Panc1 (cell line): ENCODE measurements at regions of chr1 and their contacts with region 1.

Region 1: DNA sequence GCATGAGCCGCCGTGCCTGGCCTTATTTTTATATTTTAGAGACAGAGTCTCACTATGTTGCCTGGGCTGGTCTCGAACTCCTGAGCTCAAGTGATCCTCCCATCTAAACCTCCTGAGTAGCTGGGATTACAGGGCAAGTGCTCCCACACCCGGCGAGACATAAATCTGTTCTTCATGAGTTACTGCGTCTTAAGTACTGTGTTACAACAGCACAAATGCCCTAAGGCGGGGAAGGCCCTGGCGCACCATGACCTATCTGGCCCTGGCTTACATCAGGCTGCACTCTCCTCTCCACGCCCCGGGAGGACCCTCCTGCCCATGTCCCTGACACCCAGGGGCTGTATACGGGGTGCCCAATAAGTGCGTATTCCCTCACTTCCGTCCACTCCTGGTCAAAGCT is 4.2 kb downstream of the GPR153 start:
- DNase-seq: no peak
- ATAC-seq: no peak
- H3K4me3 ChIP-seq: no peak overlapping the region
- H3K27ac ChIP-seq: no peak overlapping the region
- H3K4me1 ChIP-seq: no peaks in the 10 kb centered on the region
- H3K27me3 ChIP-seq: no peaks in the 10 kb centered on the region
- CTCF ChIP-seq: no peak

Region 2: GRCh38 chr1:6523566-6523965 is 266.9 kb after region 1 on chr1:
- CTCF ChIA-PET with region 1: interaction called, 10 read pairs
- POLR2A ChIA-PET with region 1: no interaction called
- in situ Hi-C with region 1: no loop called
- intact Hi-C with region 1: no loop called
- DNase-seq: no peak
- ATAC-seq: peak; percentile 77
- H3K4me3 ChIP-seq: no peak overlapping the region
- H3K27ac ChIP-seq: no peak overlapping the region
- H3K4me1 ChIP-seq: peaks cover 4% of the 10 kb centered on the region
- H3K27me3 ChIP-seq: no peaks in the 10 kb centered on the region
- CTCF ChIP-seq: peak; percentile 81; the same call in 1 of the 2 replicates